Transverse colon (tissue), 4 donors: ENCODE measurements at regions of chrX and their contacts with region 1.

Region 1: DNA sequence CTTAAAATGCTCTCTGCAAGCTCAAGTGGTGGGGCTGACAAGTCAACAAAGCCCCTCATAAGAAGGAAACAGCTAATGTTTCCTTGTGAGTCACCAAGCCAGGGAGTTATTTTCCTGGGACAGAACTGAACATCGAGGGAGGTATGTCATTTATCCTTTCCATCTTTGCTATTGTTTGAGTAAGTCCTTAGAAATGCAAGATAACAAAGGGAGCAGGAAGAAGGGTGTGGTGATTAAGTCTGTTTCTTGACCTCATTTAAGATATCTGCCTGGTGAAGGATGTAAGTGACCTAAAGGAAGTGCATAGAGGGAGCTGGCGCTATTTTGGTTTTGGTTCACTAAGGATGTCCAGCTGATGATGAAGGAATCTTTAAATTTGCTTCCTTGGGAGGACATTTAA is 39.9 kb downstream of the ATG4A start:
- DNase-seq: no peak
- H3K4me3 ChIP-seq: no peak overlapping the region
- H3K27ac ChIP-seq: no peak overlapping the region
- H3K4me1 ChIP-seq: no peaks in the 10 kb centered on the region
- H3K27me3 ChIP-seq: no peaks in the 10 kb centered on the region
- CTCF ChIP-seq: no peak
- EP300 ChIP-seq: no peak
- POLR2A ChIP-seq: no peak

Region 2: DNA sequence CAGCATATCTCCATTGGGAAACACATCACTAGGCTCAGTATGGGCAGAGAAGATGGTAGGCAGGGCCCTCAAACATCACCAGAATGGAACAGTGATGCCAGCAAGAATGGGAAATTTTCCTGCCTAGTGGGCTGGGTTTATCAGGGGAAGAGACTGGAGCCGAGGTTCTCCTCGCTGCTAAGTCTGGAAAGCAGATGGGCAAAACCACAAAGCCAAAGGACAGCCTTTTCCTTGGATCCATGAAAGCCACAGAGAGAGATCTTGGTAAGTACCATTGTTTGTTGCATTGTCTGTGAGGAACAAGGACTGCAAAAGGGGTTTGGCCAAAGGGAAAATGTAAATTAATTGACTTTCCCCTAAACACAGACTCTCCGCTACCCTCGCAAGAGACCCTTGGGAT is 40.2 kb after region 1 on chrX:
- in situ Hi-C with region 1: no loop called
- intact Hi-C with region 1: loop called (anchors 1 kb)
- DNase-seq: no peak
- H3K4me3 ChIP-seq: no peak overlapping the region
- H3K27ac ChIP-seq: no peak overlapping the region
- H3K4me1 ChIP-seq: no peaks in the 10 kb centered on the region
- H3K27me3 ChIP-seq: no peaks in the 10 kb centered on the region
- CTCF ChIP-seq: no peak
- EP300 ChIP-seq: no peak
- POLR2A ChIP-seq: no peak